ENCODE measurements at regions of chr9 and their contacts with region 1.

Region 1: GRCh38 chr9:99019790-99020331 is 76.2 kb downstream of the COL15A1 start:
- DNase-seq: no peak
- ATAC-seq: peak; percentile 76 to 81
- H3K4me3 ChIP-seq: no peak overlapping the region
- H3K27ac ChIP-seq: peak overlapping the region; percentile 48 to 65 (median 58)
- H3K4me1 ChIP-seq: peaks cover 0 to 4% of the 10 kb centered on the region in 2 donors
- H3K27me3 ChIP-seq: no peaks in the 10 kb centered on the region
- CTCF ChIP-seq: no peak
- POLR2A ChIP-seq: peak in 1 of 2 donors; percentile 11

Region 2: DNA sequence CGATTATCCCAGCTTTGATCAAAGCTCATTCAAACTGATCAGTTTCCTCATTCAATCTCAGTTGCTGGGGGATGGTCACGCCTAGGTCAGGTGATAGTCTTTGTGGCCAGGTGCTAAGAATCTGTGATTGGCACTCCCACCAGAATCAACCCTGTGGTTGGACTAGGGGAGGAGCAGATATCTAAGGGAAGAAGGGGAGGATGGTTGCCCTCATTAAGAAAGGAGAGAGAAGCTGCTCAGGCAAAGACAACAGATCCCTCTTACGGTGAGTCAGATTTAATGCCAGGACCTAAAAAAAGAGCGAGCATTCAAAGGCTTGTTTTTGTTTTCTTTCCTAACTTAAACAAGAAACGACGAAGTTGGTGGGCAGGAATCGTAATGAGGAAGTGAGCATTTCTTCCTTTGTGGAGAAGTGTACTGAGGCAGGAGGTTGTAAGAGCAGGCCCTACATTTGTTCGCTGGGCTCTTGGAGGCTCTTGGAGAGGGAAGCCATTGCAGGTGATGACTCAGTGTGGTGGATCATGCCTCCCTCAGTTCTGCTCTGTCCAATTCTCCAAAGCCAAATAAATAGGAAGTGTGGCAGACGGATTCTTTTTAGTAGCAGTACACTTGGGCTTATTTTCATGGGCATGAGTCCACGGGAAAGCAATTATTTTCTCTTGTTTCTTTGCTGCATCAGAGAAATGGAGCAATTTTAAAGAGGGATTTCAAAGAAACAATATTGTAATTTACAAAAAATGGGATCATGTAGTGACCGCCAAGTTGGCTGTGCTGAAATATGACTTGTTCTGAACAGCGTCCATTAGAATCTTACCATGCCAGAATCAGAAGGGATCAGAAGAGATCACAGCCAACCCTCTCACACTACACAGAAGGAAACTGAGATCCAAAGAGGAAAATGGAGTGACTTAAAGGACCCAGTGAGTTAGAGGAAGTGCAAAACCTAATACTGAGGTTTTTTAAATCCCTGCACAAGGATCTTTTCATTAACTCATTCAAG is 66.4 kb after region 1 on chr9:
- in situ Hi-C with region 1: loop called in 1 of 4 experiments (anchors 10 kb)
- intact Hi-C with region 1: no loop called
- DNase-seq: peak; percentile 4 to 20
- ATAC-seq: peak; percentile 60 to 64
- H3K4me3 ChIP-seq: no peak overlapping the region
- H3K27ac ChIP-seq: peak overlapping the region in 1 of 4 donors; percentile 21
- H3K4me1 ChIP-seq: no peaks in the 10 kb centered on the region
- H3K27me3 ChIP-seq: no peaks in the 10 kb centered on the region
- CTCF ChIP-seq: no peak
- POLR2A ChIP-seq: no peak

Measured in gastrocnemius medialis (tissue), 4 donors.